Breast epithelium (tissue), 4 donors: ENCODE measurements at regions of chr11 and their contacts with region 1.

Region 1: DNA sequence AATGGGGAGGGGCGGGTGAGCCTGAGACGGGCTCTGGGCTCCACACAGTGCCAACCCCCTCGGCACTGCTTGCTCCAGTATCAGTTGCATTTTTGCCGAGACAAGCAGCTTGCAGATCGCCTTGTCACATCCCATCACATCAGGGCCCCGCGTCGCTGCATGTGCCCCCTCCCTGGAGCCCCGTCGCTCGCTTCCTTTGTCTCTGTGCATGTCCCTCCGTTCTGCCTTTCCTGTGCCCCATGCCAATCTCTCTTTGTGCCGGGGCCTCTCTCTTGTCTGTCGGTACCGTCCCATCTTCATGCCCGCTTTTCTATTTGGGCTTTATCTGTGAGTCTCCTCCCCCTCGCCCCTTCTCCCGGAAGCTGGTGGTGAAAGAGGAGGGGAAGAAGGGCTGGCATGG is 202.2 kb downstream of the CEP164 start:
- DNase-seq: no peak
- H3K4me3 ChIP-seq: no peak overlapping the region
- H3K27ac ChIP-seq: no peak overlapping the region
- H3K4me1 ChIP-seq: no peaks in the 10 kb centered on the region
- H3K27me3 ChIP-seq: no peaks in the 10 kb centered on the region
- CTCF ChIP-seq: no peak
- POLR2A ChIP-seq: no peak

Region 2: GRCh38 chr11:117511931-117512539 is 17.8 kb before region 1 on chr11:
- intact Hi-C with region 1: loop called (anchors 2 kb)
- DNase-seq: no peak
- H3K4me3 ChIP-seq: no peak overlapping the region
- H3K27ac ChIP-seq: no peak overlapping the region
- H3K4me1 ChIP-seq: no peaks in the 10 kb centered on the region
- H3K27me3 ChIP-seq: no peaks in the 10 kb centered on the region
- CTCF ChIP-seq: no peak
- POLR2A ChIP-seq: no peak

Region 3: DNA sequence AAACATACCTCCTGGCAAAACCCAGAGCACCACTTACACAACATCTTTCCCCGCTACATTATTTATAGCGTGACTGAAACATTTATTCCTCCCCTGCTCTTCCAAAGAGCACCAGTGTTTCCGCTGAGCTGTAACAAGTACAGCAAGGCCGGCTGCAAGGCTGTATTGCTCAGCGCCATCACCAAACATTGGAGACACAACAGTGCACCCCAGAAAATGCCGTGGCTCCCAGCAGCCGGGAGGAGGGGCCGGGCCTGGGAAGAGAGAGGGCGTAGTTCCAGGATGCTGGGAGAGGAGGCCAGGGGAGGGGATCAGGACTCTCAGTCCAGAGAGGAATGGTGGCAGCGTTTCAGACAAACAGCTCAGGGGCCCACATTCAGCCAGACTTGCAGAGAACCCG is 134.0 kb after region 1 on chr11:
- intact Hi-C with region 1: loop called (anchors 5 kb)
- DNase-seq: no peak
- H3K4me3 ChIP-seq: no peak overlapping the region
- H3K27ac ChIP-seq: no peak overlapping the region
- H3K4me1 ChIP-seq: no peaks in the 10 kb centered on the region
- H3K27me3 ChIP-seq: no peaks in the 10 kb centered on the region
- CTCF ChIP-seq: no peak
- POLR2A ChIP-seq: no peak